ENCODE measurements at regions of chr3 and their contacts with region 1.

Region 1: DNA sequence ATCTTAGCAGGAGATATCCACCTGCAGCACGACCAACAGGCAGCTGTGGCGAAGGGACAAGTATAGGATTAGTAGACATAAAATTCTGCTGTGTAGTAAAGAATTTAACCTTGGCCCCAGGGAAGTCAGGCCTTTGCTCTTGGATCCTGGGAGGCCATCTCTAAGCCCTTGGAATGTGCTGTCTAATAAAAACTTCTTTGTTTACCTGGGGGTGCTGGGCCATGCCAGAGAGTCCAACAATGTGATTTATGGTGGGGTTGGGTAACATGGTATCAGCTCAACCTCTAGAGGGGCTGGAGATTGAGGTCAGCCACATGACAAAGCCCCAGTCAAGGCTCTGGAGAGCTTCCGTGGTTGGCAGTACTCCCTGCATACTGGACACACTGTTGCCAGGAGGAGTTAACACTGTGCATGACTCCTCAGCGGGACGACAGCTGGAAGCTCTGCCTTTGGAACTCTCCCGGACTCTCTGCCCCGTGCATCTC is 52.4 kb downstream of the HEG1 start:
- DNase-seq: peak; percentile 75
- ATAC-seq: peak; percentile 94

Region 2: GRCh38 chr3:125322166-125322565 is 318.8 kb after region 1 on chr3:
- intact Hi-C with region 1: no loop called
- DNase-seq: no peak
- ATAC-seq: no peak

Region 3: DNA sequence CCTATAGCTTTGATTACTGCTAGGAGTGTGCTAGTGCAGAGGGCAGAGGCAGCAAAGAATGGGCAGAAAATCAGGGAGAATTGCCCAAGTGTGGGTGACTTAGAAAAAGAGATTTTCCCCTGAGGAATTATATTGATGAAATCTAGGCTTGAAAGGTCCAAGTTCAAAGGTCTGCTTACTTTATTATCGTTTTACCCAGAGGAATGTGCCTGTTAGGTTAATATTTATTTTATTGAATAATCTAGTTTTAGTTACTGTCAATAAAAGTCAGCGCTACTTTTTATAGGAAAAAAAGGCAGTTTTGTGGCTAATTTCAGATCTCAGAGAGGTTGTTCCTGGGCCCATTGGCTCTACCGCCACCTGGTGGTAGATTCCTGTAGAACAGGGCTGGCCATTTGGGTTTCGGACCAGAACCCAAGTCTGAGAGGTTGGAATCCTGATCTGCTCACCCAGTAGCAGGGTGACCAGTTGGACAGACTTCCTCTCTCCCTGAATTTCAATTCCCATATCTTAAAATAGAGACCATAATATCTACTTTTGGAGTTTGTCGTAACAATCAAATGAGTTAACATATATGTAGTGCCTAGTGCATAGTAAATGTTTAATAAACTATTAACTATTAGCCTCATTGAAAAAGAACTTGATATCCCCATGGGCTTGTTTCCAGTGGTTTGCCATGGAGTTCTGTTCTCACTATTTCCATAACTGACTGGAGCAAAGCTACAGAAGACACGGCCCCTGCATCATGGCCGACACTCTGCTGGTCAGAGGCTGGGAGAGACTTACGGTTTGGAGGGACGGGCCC is 434.4 kb after region 1 on chr3:
- intact Hi-C with region 1: loop called (anchors 5 kb)
- DNase-seq: peak; percentile 53
- ATAC-seq: peak; percentile 49